GM18951 (cell line): ENCODE measurements at regions of chr5 and their contacts with region 1.

Region 1: GRCh38 chr5:132500931-132501630 is 10.5 kb upstream of the IRF1 start:
- POLR2A ChIP-seq: peak; percentile 40

Region 2: DNA sequence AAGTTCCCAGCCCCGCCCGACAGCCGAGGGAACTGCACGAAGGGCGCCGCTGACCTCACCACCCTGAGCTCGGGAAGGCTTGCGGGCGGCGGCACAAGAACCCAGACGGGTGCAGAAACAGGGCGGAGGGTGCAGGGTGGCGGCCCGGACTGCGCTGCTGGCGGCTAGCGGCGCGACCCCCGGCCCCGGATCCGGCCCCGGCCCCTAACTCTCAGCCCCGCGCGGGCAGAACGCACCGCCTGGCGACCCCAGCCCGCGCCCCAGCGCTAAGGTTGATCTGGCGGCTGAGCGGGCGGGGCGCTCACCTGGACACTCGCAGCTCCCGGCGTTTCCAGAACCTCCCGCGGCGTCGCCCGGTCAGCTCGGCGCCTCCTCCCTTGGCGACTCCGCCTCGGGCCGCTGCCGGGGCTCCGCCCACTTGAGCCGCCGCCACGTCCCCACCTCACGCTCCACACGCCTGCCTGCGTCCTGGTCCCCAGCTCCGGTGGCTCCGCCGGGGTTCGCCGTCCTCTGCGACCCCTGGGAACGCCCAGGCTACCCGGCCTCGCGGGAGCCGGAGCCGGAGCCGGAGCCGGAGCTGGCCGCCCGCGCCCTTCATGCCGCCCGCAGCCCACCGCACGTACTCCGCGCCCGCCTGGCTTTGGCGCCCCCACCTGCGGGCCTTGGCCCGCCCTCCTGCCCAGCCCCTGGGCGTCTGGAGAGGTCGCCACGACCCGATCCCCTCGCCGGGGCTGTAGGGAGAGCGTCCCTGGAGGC is 273.4 kb before region 1 on chr5 and contains the start of gene P4HA2:
- in situ Hi-C with region 1: loop called (anchors 25 kb)
- POLR2A ChIP-seq: no peak